Psoas muscle (tissue), 8 donors: ENCODE measurements at regions of chr5 and their contacts with region 1.

Region 1: DNA sequence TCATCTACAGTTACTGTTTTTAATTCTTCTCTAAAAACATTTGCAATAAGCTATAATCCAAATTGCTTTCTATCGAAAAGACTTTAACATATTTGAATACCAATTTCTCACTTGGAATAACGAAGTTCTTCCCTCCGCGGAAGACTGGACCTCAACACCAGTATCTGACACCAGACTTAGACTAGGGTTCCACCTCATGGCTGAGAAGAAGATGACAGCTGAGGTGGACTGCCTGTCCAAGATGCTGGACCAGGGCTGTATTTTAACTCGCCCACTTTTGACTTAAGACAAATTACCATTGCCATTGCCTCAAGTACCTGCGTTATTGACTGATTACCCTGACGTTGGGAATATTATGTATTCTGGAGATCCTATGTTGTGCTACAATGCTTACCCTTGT is 34.1 kb downstream of the ZMAT2 start:
- DNase-seq: no peak
- ATAC-seq: peak; percentile 67 to 84 (median 78)
- H3K4me3 ChIP-seq: no peak overlapping the region
- H3K27ac ChIP-seq: no peak overlapping the region
- H3K4me1 ChIP-seq: no peaks in the 10 kb centered on the region
- H3K27me3 ChIP-seq: peaks cover 0 to 6% (median 3%) of the 10 kb centered on the region in 3 donors
- CTCF ChIP-seq: peak; percentile 59

Region 2: GRCh38 chr5:140189977-140190871 is 544.1 kb before region 1 on chr5:
- intact Hi-C with region 1: no loop called
- DNase-seq: no peak
- ATAC-seq: peak; percentile 88 to 94 (median 93)
- H3K4me3 ChIP-seq: peak overlapping the region; percentile 17
- H3K27ac ChIP-seq: peak overlapping the region; percentile 85
- H3K4me1 ChIP-seq: peaks cover 50% of the 10 kb centered on the region
- H3K27me3 ChIP-seq: no peaks in the 10 kb centered on the region
- CTCF ChIP-seq: no peak

Region 3: GRCh38 chr5:140575309-140575708 is 159.0 kb before region 1 on chr5:
- intact Hi-C with region 1: loop called in 1 of 2 experiments (anchors 10 kb)
- DNase-seq: peak; percentile 62 to 75
- ATAC-seq: peak; percentile 53 to 76 (median 71)
- H3K4me3 ChIP-seq: no peak overlapping the region
- H3K27ac ChIP-seq: no peak overlapping the region
- H3K4me1 ChIP-seq: peaks cover 21% of the 10 kb centered on the region
- H3K27me3 ChIP-seq: no peaks in the 10 kb centered on the region
- CTCF ChIP-seq: peak; percentile 46

Region 4: DNA sequence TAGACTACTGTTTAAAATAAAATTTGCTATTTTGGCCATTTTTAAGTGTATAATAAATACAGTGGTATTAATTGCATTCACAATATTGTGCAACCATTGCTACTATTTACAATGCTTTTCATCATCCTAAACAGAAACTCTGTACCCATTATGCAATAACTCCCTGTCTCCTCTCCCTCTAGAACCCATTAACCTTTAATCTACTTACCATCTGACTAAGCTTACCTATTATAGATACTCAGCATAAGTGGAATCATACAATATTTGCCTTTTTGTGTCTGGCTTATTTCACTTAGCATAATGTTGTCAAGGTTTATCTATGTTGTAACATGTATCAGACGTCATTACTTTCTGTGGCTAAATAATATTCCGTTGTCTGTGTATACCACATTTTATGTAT is 127.3 kb before region 1 on chr5:
- intact Hi-C with region 1: no loop called
- DNase-seq: no peak
- ATAC-seq: peak in 2 of 4 donors; percentile 32 to 35
- H3K4me3 ChIP-seq: no peak overlapping the region
- H3K27ac ChIP-seq: no peak overlapping the region
- H3K4me1 ChIP-seq: no peaks in the 10 kb centered on the region
- H3K27me3 ChIP-seq: no peaks in the 10 kb centered on the region
- CTCF ChIP-seq: no peak